Common myeloid progenitor, CD34-positive (primary cell): ENCODE measurements at regions of chr14 and their contacts with region 1.

Region 1: GRCh38 chr14:77067632-77068514 is 30.2 kb upstream of the CIPC start:
- DNase-seq: peak; percentile 48 to 66 (median 63)
- H3K4me3 ChIP-seq: no peak overlapping the region
- H3K27ac ChIP-seq: no peak overlapping the region
- H3K4me1 ChIP-seq: peaks cover 0 to 23% (median 9%) of the 10 kb centered on the region in 4 experiments
- H3K27me3 ChIP-seq: no peaks in the 10 kb centered on the region

Region 2: GRCh38 chr14:76863724-76864407 is 204.0 kb before region 1 on chr14:
- CTCF ChIA-PET with region 1: interaction called, 791 read pairs
- POLR2A ChIA-PET with region 1: no interaction called
- DNase-seq: peak in 2 of 3 donors; percentile 72 to 78
- H3K4me3 ChIP-seq: peak overlapping the region in 1 of 7 experiments; percentile 21
- H3K27ac ChIP-seq: no peak overlapping the region
- H3K4me1 ChIP-seq: peaks cover 0 to 49% (median 25%) of the 10 kb centered on the region in 4 experiments
- H3K27me3 ChIP-seq: no peaks in the 10 kb centered on the region

Region 3: DNA sequence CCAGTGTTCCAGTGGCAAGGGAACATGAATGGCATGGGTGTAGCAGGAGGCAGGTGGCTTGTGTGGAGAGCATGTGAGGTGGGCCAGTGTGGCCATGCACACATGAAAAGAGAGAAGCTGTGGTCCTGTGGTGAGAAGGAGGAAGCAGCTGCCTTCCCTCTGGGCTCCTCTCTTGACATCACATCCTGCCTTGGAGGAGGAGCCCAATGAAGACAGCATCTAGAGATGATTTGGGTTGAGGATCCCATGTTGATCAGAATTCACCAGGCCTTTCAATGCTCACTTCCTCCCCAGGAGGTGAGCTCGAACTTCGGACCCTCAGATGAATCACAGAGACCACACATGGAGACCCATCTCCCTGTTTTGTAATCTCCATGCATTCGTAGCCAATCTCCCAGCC is 159.0 kb before region 1 on chr14:
- CTCF ChIA-PET with region 1: interaction called, 55 read pairs
- POLR2A ChIA-PET with region 1: no interaction called
- DNase-seq: peak; percentile 95 to 99 (median 99)
- H3K4me3 ChIP-seq: peak overlapping the region in 2 of 7 experiments; percentile 24 to 28
- H3K27ac ChIP-seq: peak overlapping the region; percentile 56 to 79
- H3K4me1 ChIP-seq: peaks cover 2 to 38% (median 21%) of the 10 kb centered on the region in 4 experiments
- H3K27me3 ChIP-seq: no peaks in the 10 kb centered on the region

Region 4: DNA sequence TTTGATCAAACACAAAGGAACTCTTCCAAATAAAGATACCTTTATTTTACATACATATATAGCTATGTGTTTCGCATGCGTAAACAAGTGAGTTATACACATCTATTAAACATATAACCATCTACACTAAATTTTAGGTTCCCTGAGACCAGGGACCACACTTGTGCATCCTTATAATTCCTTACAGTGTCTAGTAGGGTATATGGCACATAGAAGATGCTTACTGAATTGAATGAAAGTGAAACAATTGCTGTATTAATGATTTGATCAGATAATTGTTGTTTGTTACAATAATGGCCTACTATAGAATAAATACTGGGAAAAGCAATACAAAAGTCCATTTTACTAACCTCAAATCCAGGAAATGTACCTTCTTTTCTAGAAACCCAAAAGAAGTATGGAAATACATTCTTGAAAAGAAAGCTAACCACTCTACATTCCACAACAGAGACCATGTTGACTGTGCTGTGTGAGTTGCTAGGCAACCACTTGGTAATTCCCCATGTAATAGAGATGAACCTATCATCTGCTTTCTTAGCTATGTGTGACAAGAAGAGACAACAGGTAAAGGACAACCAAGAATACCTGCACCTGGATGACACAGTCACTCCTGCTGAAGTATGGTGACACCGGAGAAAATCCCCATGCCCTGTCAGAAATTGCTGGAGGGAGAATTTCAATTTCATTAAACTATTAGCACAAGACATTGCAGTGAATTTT is 18.3 kb after region 1 on chr14:
- CTCF ChIA-PET with region 1: interaction called, 39 read pairs
- POLR2A ChIA-PET with region 1: no interaction called
- DNase-seq: peak in 2 of 3 donors; percentile 39 to 45
- H3K4me3 ChIP-seq: no peak overlapping the region
- H3K27ac ChIP-seq: no peak overlapping the region
- H3K4me1 ChIP-seq: peaks cover 0 to 5% (median 0%) of the 10 kb centered on the region in 4 experiments
- H3K27me3 ChIP-seq: no peaks in the 10 kb centered on the region

Region 5: DNA sequence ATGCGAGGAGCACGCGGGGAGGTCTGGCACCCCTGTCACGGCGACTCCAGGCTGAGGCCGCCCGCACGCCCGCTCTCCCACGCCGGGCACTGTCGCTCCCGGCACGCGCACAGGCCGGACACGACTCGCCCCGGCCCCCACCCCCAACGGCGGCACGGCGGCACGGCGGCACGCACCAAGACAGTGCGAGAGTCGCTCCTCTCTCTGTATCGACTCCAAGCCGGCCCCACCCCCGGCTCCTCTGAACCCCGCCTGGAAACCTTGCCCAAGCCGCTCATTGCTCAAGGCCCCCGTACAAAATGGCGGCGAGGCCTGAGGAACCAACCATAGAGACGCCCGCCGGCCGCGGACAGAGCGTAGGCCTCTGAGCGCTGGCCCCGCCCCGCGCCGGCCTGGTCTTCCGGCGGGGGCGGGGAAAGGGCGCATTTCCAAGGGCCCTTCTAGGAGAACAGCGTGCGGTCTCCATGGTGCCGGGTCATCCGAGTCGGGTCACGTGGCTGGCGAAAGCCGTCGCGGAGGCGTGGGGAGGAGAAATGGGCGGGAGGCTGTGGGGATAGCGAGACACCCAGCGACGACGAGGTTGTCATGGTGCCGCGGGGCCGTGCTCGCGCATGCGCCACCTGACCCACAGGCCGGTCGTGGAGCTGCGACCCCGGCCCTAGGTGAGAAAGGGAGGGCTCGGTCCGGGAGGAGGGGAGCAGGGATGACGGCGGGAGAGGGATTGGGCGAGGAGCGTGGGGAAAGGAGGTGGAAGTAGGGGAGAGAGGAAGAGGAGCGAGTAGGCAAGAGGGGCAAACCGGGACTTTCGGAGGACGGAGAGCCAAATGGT is 30.0 kb after region 1 on chr14 and contains the start of gene CIPC:
- CTCF ChIA-PET with region 1: interaction called, 32 read pairs
- POLR2A ChIA-PET with region 1: no interaction called
- DNase-seq: peak; percentile 99 to 100 (median 99)
- H3K4me3 ChIP-seq: peak within 1 kb of the TSS; percentile 83 to 98 (median 95)
- H3K27ac ChIP-seq: peak within 1 kb of the TSS; percentile 83 to 95
- H3K4me1 ChIP-seq: peaks cover 2 to 33% (median 22%) of the 10 kb centered on the region in 4 experiments
- H3K27me3 ChIP-seq: no peaks in the 10 kb centered on the region